Left lung (tissue), 14 donors: ENCODE measurements at regions of chr9 and their contacts with region 1.

Region 1: GRCh38 chr9:107637421-107638420 is 148.2 kb upstream of the KLF4 start:
- DNase-seq: peak; percentile 88 to 98 (median 91)
- ATAC-seq: peak; percentile 89
- H3K4me3 ChIP-seq: peak overlapping the region; percentile 7 to 39
- H3K27ac ChIP-seq: peak overlapping the region; percentile 89 to 93
- H3K4me1 ChIP-seq: peaks cover 0 to 32% of the 10 kb centered on the region in 2 donors
- H3K27me3 ChIP-seq: peaks cover 0 to 19% of the 10 kb centered on the region in 2 donors
- CTCF ChIP-seq: peak; percentile 20 to 31

Region 2: GRCh38 chr9:107489687-107490605 is 147.8 kb before region 1 on chr9 and contains the start of gene KLF4:
- intact Hi-C with region 1: loop called in 1 of 2 experiments (anchors 5 kb)
- DNase-seq: peak; percentile 90 to 96 (median 94)
- ATAC-seq: peak; percentile 80
- H3K4me3 ChIP-seq: peak within 1 kb of the TSS; percentile 59 to 85
- H3K27ac ChIP-seq: peak within 1 kb of the TSS; percentile 89 to 96
- H3K4me1 ChIP-seq: peaks cover 10 to 46% of the 10 kb centered on the region in 2 donors
- H3K27me3 ChIP-seq: peaks cover 0 to 62% of the 10 kb centered on the region in 2 donors
- CTCF ChIP-seq: no peak
- polyA plus RNA-seq, gene KLF4: 12.3 to 89.6 (median 53.3) TPM